Activated CD4-positive, alpha-beta T cell treated with anti-CD3 and anti-CD28 coated beads for 36 hours (primary cell): ENCODE measurements at regions of chr19 and their contacts with region 1.

Region 1: GRCh38 chr19:3710265-3710812 is 2.2 kb downstream of the TJP3 start:
- DNase-seq: no peak
- ATAC-seq: no peak
- H3K4me3 Mint-ChIP-seq: no peak overlapping the region
- H3K27ac Mint-ChIP-seq: no peak overlapping the region
- H3K4me1 Mint-ChIP-seq: no peaks in the 10 kb centered on the region
- H3K27me3 Mint-ChIP-seq: peaks cover 2% of the 10 kb centered on the region

Region 2: GRCh38 chr19:3544742-3545668 is 165.3 kb before region 1 on chr19:
- CTCF ChIA-PET with region 1: interaction called, 3 read pairs
- POLR2A ChIA-PET with region 1: no interaction called
- intact Hi-C with region 1: loop called (anchors 1 to 5 kb)
- DNase-seq: peak; percentile 90
- ATAC-seq: peak; percentile 84
- H3K4me3 Mint-ChIP-seq: no peak overlapping the region
- H3K27ac Mint-ChIP-seq: peak overlapping the region; percentile 58
- H3K4me1 Mint-ChIP-seq: peaks cover 6% of the 10 kb centered on the region
- H3K27me3 Mint-ChIP-seq: no peaks in the 10 kb centered on the region

Region 3: DNA sequence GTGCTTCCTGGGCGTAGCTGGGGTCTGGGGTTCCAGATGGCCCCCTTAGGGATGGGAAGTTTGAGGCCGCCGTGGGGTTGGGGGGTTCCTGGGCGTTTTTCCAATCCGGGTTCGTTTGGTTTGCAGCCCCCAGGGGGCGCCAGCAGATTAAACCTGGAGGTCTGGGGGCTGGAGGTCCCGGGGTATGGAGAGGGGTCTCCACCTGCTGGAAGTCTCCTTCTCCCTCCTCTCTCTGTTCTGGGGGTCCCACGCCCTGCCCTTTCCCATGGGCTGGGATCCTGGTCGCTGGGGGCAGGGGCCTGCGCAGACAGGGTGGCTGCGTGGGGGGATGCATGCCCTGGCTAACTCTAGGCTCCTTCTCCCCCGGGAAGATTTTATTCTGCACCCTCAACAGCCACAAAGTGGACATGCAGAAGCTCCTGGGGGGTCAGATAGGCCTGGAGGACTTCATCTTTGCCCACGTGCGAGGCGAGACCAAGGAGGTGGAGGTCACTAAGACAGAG is 124.2 kb before region 1 on chr19:
- CTCF ChIA-PET with region 1: no interaction called
- POLR2A ChIA-PET with region 1: no interaction called
- intact Hi-C with region 1: loop called in 1 of 2 experiments (anchors 1 kb)
- DNase-seq: peak; percentile 63
- ATAC-seq: no peak
- H3K4me3 Mint-ChIP-seq: no peak overlapping the region
- H3K27ac Mint-ChIP-seq: no peak overlapping the region
- H3K4me1 Mint-ChIP-seq: no peaks in the 10 kb centered on the region
- H3K27me3 Mint-ChIP-seq: no peaks in the 10 kb centered on the region

Region 4: GRCh38 chr19:3618144-3618810 is 92.1 kb before region 1 on chr19:
- CTCF ChIA-PET with region 1: no interaction called
- POLR2A ChIA-PET with region 1: no interaction called
- intact Hi-C with region 1: no loop called
- DNase-seq: peak; percentile 75
- ATAC-seq: peak; percentile 62
- H3K4me3 Mint-ChIP-seq: no peak overlapping the region
- H3K27ac Mint-ChIP-seq: no peak overlapping the region
- H3K4me1 Mint-ChIP-seq: peaks cover 13% of the 10 kb centered on the region
- H3K27me3 Mint-ChIP-seq: no peaks in the 10 kb centered on the region

Region 5: GRCh38 chr19:3665681-3666544 is 44.4 kb before region 1 on chr19:
- CTCF ChIA-PET with region 1: interaction called, 7 read pairs
- POLR2A ChIA-PET with region 1: no interaction called
- intact Hi-C with region 1: loop called (anchors 1 kb)
- DNase-seq: peak; percentile 86
- ATAC-seq: peak; percentile 88
- H3K4me3 Mint-ChIP-seq: no peak overlapping the region
- H3K27ac Mint-ChIP-seq: no peak overlapping the region
- H3K4me1 Mint-ChIP-seq: peaks cover 9% of the 10 kb centered on the region
- H3K27me3 Mint-ChIP-seq: no peaks in the 10 kb centered on the region

Region 6: DNA sequence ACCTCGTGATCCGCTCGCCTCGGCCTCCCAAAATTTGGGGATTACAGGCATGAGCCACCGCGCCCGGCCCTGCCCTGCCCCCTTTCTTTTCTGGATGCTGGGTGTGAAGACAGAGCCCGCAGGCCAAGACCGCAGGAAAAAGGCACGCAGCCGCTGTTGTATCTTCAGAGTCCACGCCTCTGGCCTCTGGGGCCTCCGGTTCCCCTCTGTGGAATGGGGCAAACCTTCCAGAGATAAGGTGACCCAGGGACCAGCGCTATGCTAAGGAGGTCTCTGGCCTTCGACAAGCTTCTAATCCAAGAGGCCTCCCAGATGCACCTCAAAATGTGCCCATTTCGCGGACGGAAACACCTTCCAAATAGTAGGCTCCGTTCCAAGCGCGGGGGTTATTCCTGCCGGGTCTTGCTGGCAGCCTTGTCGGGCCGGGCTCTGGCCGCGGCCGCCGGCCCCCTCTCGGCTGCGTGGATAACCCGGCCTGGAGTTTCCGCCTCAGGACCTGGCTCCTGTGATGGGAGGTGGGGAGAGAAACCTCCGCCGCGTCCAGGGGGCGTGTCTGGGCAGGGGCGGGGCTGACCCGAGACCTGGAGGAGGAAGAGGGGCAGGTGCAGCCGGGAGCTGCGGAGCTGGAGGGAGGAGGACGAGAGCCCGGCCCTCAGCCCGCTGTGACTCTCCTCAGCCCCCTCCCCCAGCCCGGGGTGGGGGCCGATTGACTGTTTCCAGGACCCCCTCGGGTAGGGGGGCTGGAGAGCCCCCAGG is 11.0 kb after region 1 on chr19:
- CTCF ChIA-PET with region 1: interaction called, 12 read pairs
- POLR2A ChIA-PET with region 1: no interaction called
- intact Hi-C with region 1: no loop called
- DNase-seq: peak; percentile 92
- ATAC-seq: peak; percentile 94
- H3K4me3 Mint-ChIP-seq: peak overlapping the region; percentile 13
- H3K27ac Mint-ChIP-seq: no peak overlapping the region
- H3K4me1 Mint-ChIP-seq: peaks cover 10% of the 10 kb centered on the region
- H3K27me3 Mint-ChIP-seq: peaks cover 4% of the 10 kb centered on the region